ENCODE measurements at regions of chr12 and their contacts with region 1.

Region 1: DNA sequence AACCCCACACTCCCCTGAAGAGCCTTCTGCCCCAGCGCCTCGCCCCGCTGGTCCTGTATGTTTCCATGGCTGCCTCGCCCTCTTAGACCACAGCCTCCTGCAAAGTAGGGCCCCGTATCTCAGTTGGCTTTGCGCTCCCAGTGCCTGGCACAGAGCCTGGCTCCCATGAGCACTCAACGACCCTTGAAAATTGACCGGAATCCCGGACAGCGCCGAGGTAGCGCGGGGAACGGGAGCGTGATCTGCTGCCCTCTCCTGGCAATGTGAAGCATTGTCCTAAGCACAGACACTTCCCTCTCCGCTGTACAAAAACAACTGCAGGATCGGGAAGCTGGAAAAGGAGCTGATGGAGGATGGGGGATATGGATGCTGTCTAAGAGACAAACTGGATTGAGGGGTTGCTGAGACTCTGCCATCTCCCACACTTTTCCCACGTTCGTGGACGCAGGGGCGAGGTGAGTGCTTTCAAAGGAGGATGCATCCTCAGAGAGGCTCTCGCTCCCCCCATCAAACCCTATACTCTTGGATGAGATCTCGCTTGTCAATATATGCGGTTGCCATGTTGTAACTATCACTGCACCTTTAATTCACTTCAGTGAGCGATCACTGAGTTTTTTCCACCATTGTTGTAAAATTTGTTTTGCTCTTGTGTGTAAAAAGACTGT is 10.7 kb upstream of the FKBP4 start:
- DNase-seq: peak; percentile 65
- H3K4me3 Mint-ChIP-seq: peak overlapping the region; percentile 60
- H3K27ac Mint-ChIP-seq: no peak overlapping the region
- H3K4me1 Mint-ChIP-seq: peaks cover 14% of the 10 kb centered on the region
- H3K27me3 Mint-ChIP-seq: peaks cover 74% of the 10 kb centered on the region
- CTCF ChIP-seq: peak; percentile 60

Region 2: DNA sequence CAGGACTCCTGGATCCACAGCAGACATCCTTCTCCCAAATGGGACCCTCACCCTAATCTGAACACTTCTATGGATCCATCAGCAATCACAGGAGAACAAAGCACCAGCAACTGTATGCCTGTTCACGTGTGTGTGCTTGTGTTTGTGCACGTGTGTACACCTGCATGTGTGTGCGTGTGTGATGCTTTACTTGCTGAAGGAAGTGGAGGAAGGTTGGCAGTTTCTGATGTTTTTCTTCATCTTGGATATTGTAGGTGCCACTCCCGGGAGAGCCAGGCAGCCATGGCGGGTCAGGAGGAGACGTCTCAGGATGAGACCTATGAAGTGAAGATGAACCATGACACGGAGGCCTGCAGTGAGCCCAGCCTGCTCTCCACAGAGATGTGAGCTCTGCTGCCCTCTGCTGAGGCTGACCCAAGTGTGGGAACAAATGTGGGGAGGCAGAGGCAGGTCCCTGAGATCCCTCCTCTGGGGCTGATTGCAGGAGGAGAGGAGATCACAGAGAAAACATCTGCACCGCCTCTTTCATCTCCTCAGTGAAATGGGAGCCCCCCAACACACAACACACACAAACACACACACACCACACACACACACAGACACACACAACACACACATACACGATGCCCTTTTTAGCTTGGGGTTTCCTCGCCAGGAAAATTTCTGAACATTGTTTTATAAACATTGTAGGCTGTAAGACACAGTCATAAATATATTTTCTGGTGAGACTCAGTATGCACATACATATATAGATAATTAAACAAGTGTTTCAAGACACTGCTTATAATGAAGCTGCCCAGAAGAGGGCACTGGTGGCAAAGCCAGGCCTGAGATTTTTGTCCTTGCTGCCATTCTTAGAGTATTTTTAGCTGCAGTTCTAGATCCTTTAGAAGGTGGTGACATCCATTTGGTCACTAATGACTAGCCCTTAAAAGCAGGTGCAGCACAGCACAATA is 101.5 kb before region 1 on chr12:
- CTCF ChIA-PET with region 1: interaction called, 5 read pairs
- intact Hi-C with region 1: loop called (anchors 1 kb)
- DNase-seq: peak; percentile 50
- H3K4me3 Mint-ChIP-seq: no peak overlapping the region
- H3K27ac Mint-ChIP-seq: no peak overlapping the region
- H3K4me1 Mint-ChIP-seq: peaks cover 8% of the 10 kb centered on the region
- H3K27me3 Mint-ChIP-seq: peaks cover 73% of the 10 kb centered on the region
- CTCF ChIP-seq: peak; percentile 17

Region 3: GRCh38 chr12:2739817-2740641 is 44.0 kb before region 1 on chr12:
- CTCF ChIA-PET with region 1: interaction called, 20 read pairs
- intact Hi-C with region 1: loop called (anchors 1 kb)
- DNase-seq: peak; percentile 43
- H3K4me3 Mint-ChIP-seq: no peak overlapping the region
- H3K27ac Mint-ChIP-seq: no peak overlapping the region
- H3K4me1 Mint-ChIP-seq: no peaks in the 10 kb centered on the region
- H3K27me3 Mint-ChIP-seq: peaks cover 91% of the 10 kb centered on the region
- CTCF ChIP-seq: peak; percentile 56